GM12878 (cell line): ENCODE measurements at regions of chr7 and their contacts with region 1.

Region 1: GRCh38 chr7:43834463-43835251 is 34.7 kb downstream of the MRPS24 start:
- DNase-seq: peak; percentile 73
- ATAC-seq: peak; percentile 81
- H3K4me3 ChIP-seq: peak overlapping the region; percentile 52
- H3K27ac ChIP-seq: peak overlapping the region; percentile 69
- H3K4me1 ChIP-seq: peaks cover 4% of the 10 kb centered on the region; the same call in 1 of the 2 replicates
- H3K27me3 ChIP-seq: no peaks in the 10 kb centered on the region
- CTCF ChIP-seq: no peak
- EP300 ChIP-seq: peak in 1 of 2 experiments; percentile 6; a peak in 1 of 4 replicates
- POLR2A ChIP-seq: no peak
- RAD21 ChIP-seq: no peak

Region 2: DNA sequence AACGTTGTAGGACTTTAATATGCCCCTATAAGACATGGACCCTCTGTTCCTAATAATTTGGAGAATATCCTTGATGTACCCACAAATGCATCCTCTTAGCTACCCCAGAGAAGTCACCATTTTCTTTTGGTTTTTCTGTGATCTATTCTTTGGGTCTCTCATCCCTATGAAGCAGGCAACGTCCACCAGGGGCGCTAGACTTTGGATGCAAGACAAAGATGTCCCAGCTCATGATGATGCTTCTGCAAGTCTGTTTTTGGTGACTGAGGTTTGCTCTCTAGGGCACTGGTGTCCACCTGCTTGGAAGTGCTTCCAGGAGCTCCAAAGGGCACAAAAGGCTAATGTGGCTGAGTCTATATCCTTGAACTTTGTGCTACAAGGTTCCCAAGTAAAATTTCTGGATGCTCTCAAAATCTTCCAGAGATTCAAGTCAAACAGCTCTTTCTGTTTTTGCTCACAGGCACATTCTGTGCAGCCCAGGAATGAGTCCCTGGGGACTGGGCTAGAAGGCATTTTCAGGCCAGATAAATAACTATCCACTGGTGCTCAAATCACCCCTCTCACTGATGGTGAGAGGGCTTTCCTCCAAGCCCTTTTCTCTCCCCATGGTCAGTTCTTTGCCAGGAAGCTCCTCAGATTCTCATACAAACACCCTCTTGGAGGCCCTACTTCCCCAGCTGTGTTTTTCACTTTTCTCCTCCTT is 1089.1 kb before region 1 on chr7:
- CTCF ChIA-PET with region 1: no interaction called
- POLR2A ChIA-PET with region 1: no interaction called
- RAD21 ChIA-PET with region 1: no interaction called
- SMC1A ChIA-PET with region 1: no interaction called
- in situ Hi-C with region 1: no loop called
- intact Hi-C with region 1: no loop called
- DNase-seq: no peak
- ATAC-seq: peak; percentile 57
- H3K4me3 ChIP-seq: no peak overlapping the region
- H3K27ac ChIP-seq: no peak overlapping the region
- H3K4me1 ChIP-seq: no peaks in the 10 kb centered on the region
- H3K27me3 ChIP-seq: no peaks in the 10 kb centered on the region; a peak in 1 of 4 replicates
- CTCF ChIP-seq: peak; percentile 42 to 73 (median 69)
- EP300 ChIP-seq: no peak
- POLR2A ChIP-seq: no peak
- RAD21 ChIP-seq: no peak

Region 3: GRCh38 chr7:42907316-42907715 is 927.3 kb before region 1 on chr7:
- CTCF ChIA-PET with region 1: no interaction called
- POLR2A ChIA-PET with region 1: no interaction called
- RAD21 ChIA-PET with region 1: no interaction called
- SMC1A ChIA-PET with region 1: no interaction called
- in situ Hi-C with region 1: no loop called
- intact Hi-C with region 1: no loop called
- DNase-seq: no peak
- ATAC-seq: no peak
- H3K4me3 ChIP-seq: no peak overlapping the region
- H3K27ac ChIP-seq: no peak overlapping the region
- H3K4me1 ChIP-seq: peaks cover 3% of the 10 kb centered on the region; the same call in 1 of the 2 replicates
- H3K27me3 ChIP-seq: no peaks in the 10 kb centered on the region
- CTCF ChIP-seq: no peak
- EP300 ChIP-seq: no peak
- POLR2A ChIP-seq: no peak
- RAD21 ChIP-seq: no peak

Region 4: DNA sequence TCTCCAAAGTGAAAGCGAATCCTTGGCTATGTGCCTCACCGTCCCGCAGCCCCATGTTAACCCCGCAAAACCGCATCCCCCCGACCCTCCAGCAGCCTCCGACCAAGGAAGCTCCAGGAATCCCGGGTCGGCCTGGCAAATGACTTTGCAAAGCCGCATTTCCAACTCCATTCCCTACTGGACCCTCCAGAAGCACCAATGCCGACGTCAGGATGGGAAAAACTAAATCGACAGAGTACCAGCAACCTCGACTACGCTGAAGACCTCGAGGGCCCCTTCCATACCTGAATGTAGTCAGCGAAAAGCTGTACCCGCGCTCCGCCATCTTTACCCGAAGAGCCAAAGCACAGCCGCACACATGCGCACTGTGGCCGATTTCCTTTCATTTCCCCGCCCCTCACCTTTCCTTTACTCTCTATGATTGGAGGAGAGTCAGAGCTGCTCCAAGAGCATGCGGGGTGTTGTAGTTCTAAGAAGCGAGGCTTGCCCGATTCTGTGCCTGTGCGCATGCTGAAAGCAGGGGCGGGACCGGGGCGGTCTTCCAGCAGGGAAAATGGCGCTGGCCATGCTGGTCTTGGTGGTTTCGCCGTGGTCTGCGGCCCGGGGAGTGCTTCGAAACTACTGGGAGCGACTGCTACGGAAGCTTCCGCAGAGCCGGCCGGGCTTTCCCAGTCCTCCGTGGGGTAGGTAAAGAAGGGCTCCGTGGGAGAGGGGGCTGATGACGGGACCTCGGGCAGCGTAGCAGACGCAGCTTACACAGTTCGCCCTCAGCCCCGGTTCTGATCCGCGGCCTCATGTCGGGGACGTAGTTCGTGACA is 902.6 kb before region 1 on chr7 and contains the starts of genes MRPL32 and PSMA2:
- CTCF ChIA-PET with region 1: interaction called, 3 read pairs
- POLR2A ChIA-PET with region 1: interaction called, 3 read pairs
- RAD21 ChIA-PET with region 1: no interaction called
- SMC1A ChIA-PET with region 1: interaction called, 4 read pairs
- in situ Hi-C with region 1: loop called (anchors 10 kb)
- intact Hi-C with region 1: no loop called
- DNase-seq: peak; percentile 95
- ATAC-seq: peak; percentile 97
- H3K4me3 ChIP-seq: peak within 1 kb of the TSS; percentile 94
- H3K27ac ChIP-seq: peak within 1 kb of the TSS; percentile 86
- H3K4me1 ChIP-seq: peaks cover 15% of the 10 kb centered on the region; the same call in 1 of the 2 replicates
- H3K27me3 ChIP-seq: no peaks in the 10 kb centered on the region
- CTCF ChIP-seq: no peak
- EP300 ChIP-seq: no peak
- POLR2A ChIP-seq: peak; percentile 96
- RAD21 ChIP-seq: no peak
- polyA plus RNA-seq, gene MRPL32: 274 to 339 TPM
- polyA plus RNA-seq, gene PSMA2: 1,068 to 1,223 TPM

Region 5: GRCh38 chr7:43454936-43455518 is 379.6 kb before region 1 on chr7:
- CTCF ChIA-PET with region 1: interaction called, 42 read pairs
- POLR2A ChIA-PET with region 1: no interaction called
- RAD21 ChIA-PET with region 1: interaction called, 9 read pairs
- SMC1A ChIA-PET with region 1: interaction called, 8 read pairs
- in situ Hi-C with region 1: no loop called
- intact Hi-C with region 1: loop called (anchors 5 kb)
- DNase-seq: peak; percentile 13
- ATAC-seq: peak; percentile 92
- H3K4me3 ChIP-seq: no peak overlapping the region
- H3K27ac ChIP-seq: no peak overlapping the region
- H3K4me1 ChIP-seq: no peaks in the 10 kb centered on the region
- H3K27me3 ChIP-seq: no peaks in the 10 kb centered on the region; a peak in 2 of 4 replicates
- CTCF ChIP-seq: peak; percentile 44 to 57 (median 45)
- EP300 ChIP-seq: peak in 1 of 2 experiments; percentile 13; a peak in 1 of 4 replicates
- POLR2A ChIP-seq: no peak
- RAD21 ChIP-seq: peak; percentile 50; the same call in 1 of the 2 replicates

Region 6: DNA sequence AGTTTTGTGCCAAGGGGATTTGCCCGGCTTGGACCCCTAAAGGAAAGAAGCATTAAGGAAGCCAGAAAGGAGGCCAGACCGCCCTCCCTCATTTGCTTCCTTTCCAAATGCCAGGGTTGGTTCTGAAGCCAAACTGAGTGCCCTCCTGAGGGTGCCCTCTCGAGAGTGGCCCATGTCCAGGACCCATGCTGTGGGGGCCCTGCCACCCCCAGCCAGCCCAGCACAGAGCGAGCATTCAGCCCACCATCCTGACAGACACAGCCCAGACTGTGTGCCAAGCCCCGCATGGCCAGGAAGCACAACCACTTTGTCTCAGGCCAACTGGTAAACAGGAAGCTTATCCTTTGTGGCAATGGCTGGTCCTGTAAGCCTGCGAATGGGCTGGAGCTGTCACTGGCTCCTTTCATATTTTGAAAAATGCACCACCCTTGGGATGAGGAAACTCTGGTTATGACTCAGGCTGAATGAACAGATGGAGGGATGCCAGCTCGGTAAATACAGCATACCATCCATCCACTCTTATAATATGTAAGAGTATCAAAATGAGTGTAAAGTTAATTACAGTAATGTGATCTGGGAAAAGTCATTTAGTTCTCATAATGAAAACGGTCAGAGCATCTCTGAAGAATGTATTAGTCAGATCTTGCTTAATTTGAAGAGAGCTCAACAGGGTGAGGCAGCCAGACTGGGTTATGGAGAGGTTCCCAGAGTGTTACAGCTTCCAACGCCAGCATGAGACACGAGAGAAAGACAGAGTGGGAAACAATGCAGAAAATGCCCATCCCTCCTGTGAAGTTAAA is 186.8 kb before region 1 on chr7:
- CTCF ChIA-PET with region 1: interaction called, 7 read pairs
- POLR2A ChIA-PET with region 1: interaction called, 5 read pairs
- RAD21 ChIA-PET with region 1: interaction called, 12 read pairs
- SMC1A ChIA-PET with region 1: interaction called, 8 read pairs
- in situ Hi-C with region 1: no loop called
- intact Hi-C with region 1: loop called (anchors 2 kb)
- DNase-seq: peak; percentile 85
- ATAC-seq: peak; percentile 55
- H3K4me3 ChIP-seq: peak overlapping the region; percentile 58
- H3K27ac ChIP-seq: peak overlapping the region; percentile 99
- H3K4me1 ChIP-seq: peaks cover 68% of the 10 kb centered on the region
- H3K27me3 ChIP-seq: no peaks in the 10 kb centered on the region
- CTCF ChIP-seq: no peak
- EP300 ChIP-seq: peak in 1 of 2 experiments; percentile 40; a peak in 2 of 4 replicates
- POLR2A ChIP-seq: peak; percentile 48
- RAD21 ChIP-seq: no peak

Region 7: DNA sequence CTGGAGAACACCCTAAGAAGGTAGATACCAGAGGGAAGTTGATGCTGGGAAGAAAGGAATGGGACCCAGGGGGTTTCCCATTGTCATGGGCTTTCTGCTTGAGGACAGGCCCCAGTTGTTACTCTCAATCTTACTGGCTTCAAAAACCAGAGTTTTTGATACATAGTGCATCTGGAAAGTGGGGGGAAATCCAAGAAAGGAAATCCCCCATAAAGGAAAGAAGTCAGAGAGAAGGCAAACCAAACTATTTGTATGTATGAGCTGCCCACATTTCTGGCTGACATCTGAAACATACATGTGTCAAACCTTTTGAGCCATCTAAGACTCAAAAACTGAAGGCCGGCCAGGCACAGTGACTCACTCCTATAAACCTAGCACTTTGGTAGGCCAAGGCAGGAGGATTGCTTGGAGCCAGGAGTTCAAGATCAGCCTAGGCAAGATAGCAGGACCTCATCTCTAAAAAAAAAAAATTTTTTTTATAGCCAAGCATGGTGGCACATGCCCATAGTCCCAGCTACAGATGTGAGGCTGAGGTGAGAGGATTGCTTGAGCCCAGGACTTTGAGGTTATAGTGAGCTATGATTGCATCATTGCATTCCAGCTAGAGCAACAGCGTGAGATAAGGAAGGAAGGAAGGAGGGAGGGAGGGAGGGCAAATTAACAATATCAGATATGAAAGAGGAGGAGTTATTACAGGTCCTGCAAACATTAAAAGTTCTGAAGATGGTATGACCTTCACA is 98.7 kb before region 1 on chr7:
- CTCF ChIA-PET with region 1: interaction called, 24 read pairs
- POLR2A ChIA-PET with region 1: interaction called, 5 read pairs
- RAD21 ChIA-PET with region 1: interaction called, 12 read pairs
- SMC1A ChIA-PET with region 1: interaction called, 38 read pairs
- in situ Hi-C with region 1: no loop called
- intact Hi-C with region 1: no loop called
- DNase-seq: peak; percentile 90
- ATAC-seq: peak; percentile 90
- H3K4me3 ChIP-seq: no peak overlapping the region
- H3K27ac ChIP-seq: peak overlapping the region; percentile 58
- H3K4me1 ChIP-seq: peaks cover 31% of the 10 kb centered on the region
- H3K27me3 ChIP-seq: no peaks in the 10 kb centered on the region
- CTCF ChIP-seq: no peak
- EP300 ChIP-seq: peak; percentile 67 to 81; a peak in 3 of 4 replicates
- POLR2A ChIP-seq: no peak
- RAD21 ChIP-seq: 0 out of 2 replicates have a peak, but pooled peaks have one; percentile 1

Region 8: DNA sequence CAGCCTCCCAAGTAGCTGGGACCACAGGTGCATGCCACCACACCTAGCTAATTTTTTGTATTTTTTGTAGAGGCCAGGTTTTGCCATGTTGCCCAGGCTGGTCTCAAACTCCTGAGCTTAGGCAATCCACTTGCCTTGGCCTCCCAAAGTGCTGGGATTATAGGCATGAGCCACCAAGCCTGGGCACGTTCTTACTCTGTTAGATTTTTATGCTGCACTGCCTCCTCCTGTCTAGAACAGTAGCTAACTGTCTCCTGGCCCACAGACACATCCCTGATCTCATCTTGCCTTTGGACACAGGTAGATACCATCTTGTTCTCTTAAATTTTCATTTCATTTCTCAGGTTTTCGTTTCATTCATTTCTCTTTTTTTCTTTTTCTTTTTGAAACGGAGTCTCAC is 35.1 kb before region 1 on chr7:
- CTCF ChIA-PET with region 1: interaction called, 16 read pairs
- POLR2A ChIA-PET with region 1: no interaction called
- RAD21 ChIA-PET with region 1: interaction called, 4 read pairs
- SMC1A ChIA-PET with region 1: interaction called, 19 read pairs
- in situ Hi-C with region 1: no loop called
- intact Hi-C with region 1: no loop called
- DNase-seq: no peak
- ATAC-seq: peak; percentile 63
- H3K4me3 ChIP-seq: no peak overlapping the region
- H3K27ac ChIP-seq: no peak overlapping the region
- H3K4me1 ChIP-seq: no peaks in the 10 kb centered on the region
- H3K27me3 ChIP-seq: no peaks in the 10 kb centered on the region
- CTCF ChIP-seq: peak; percentile 16 to 30 (median 21); a peak in 1 of 6 replicates
- EP300 ChIP-seq: no peak
- POLR2A ChIP-seq: no peak
- RAD21 ChIP-seq: peak; percentile 29; the same call in 1 of the 2 replicates